ENCODE measurements at regions of chr12 and their contacts with region 1.

Region 1: GRCh38 chr12:46430340-46430948 is 57.9 kb upstream of the SLC38A2 start:
- DNase-seq: peak; percentile 94
- ATAC-seq: peak; percentile 88
- H3K4me3 ChIP-seq: no peak overlapping the region
- H3K27ac ChIP-seq: peak overlapping the region; percentile 99
- H3K4me1 ChIP-seq: peaks cover 56% of the 10 kb centered on the region
- H3K27me3 ChIP-seq: no peaks in the 10 kb centered on the region
- CTCF ChIP-seq: no peak

Region 2: GRCh38 chr12:46005151-46005797 is 425.2 kb before region 1 on chr12:
- CTCF ChIA-PET with region 1: no interaction called
- POLR2A ChIA-PET with region 1: no interaction called
- in situ Hi-C with region 1: no loop called
- intact Hi-C with region 1: no loop called
- DNase-seq: no peak
- ATAC-seq: no peak
- H3K4me3 ChIP-seq: no peak overlapping the region
- H3K27ac ChIP-seq: no peak overlapping the region
- H3K4me1 ChIP-seq: no peaks in the 10 kb centered on the region
- H3K27me3 ChIP-seq: no peaks in the 10 kb centered on the region
- CTCF ChIP-seq: peak; percentile 62; the same call in 1 of the 2 replicates

Region 3: GRCh38 chr12:46383654-46384450 is 46.6 kb before region 1 on chr12:
- CTCF ChIA-PET with region 1: no interaction called
- POLR2A ChIA-PET with region 1: no interaction called
- in situ Hi-C with region 1: no loop called
- intact Hi-C with region 1: loop called (anchors 2 kb)
- DNase-seq: no peak
- ATAC-seq: peak; percentile 85
- H3K4me3 ChIP-seq: peak overlapping the region; percentile 60 to 72
- H3K27ac ChIP-seq: peak overlapping the region; percentile 100
- H3K4me1 ChIP-seq: peaks cover 61% of the 10 kb centered on the region
- H3K27me3 ChIP-seq: no peaks in the 10 kb centered on the region
- CTCF ChIP-seq: 0 out of 2 replicates have a peak, but pooled peaks have one; percentile 8

Region 4: GRCh38 chr12:46473634-46474329 is 43.3 kb after region 1 on chr12:
- CTCF ChIA-PET with region 1: no interaction called
- POLR2A ChIA-PET with region 1: no interaction called
- in situ Hi-C with region 1: loop called (anchors 5 kb)
- intact Hi-C with region 1: no loop called
- DNase-seq: no peak
- ATAC-seq: peak; percentile 96
- H3K4me3 ChIP-seq: peak overlapping the region; percentile 11 to 23; a peak in 3 of 4 replicates
- H3K27ac ChIP-seq: peak overlapping the region; percentile 94
- H3K4me1 ChIP-seq: peaks cover 50% of the 10 kb centered on the region
- H3K27me3 ChIP-seq: no peaks in the 10 kb centered on the region
- CTCF ChIP-seq: no peak

Region 5: DNA sequence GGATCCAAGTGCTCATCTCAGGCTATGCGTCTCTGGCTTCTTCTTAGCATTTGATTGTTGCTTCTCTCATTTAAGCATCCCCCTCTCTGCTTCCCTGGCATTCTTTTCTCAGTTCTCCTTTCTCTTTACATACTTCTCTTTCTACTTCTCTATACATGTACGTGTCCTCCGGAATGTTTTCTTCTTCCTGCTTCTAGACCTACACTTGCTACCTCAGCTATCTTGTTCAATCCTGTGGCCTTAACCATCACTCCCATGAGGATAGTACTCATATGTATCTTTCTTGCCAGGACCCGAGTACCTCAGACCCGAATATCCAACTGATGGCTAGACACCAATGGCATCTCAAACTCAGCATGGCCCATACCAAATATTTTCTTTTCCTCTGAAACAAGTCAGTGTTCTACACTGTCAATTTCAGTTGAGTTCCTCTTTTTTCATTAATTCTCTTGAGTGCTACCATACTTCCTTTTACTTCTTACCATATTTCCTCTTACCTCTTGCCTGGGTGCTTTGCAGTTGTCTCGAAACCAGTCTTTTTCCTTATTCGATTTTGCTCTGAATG is 57.2 kb after region 1 on chr12:
- CTCF ChIA-PET with region 1: no interaction called
- POLR2A ChIA-PET with region 1: no interaction called
- in situ Hi-C with region 1: no loop called
- intact Hi-C with region 1: loop called (anchors 2 kb)
- DNase-seq: no peak
- ATAC-seq: no peak
- H3K4me3 ChIP-seq: no peak overlapping the region
- H3K27ac ChIP-seq: peak overlapping the region; percentile 60; the same call in 1 of the 2 replicates
- H3K4me1 ChIP-seq: peaks cover 16% of the 10 kb centered on the region
- H3K27me3 ChIP-seq: no peaks in the 10 kb centered on the region
- CTCF ChIP-seq: no peak

Measured in Panc1 (cell line).